ENCODE measurements at regions of chr13 and their contacts with region 1.

Region 1: DNA sequence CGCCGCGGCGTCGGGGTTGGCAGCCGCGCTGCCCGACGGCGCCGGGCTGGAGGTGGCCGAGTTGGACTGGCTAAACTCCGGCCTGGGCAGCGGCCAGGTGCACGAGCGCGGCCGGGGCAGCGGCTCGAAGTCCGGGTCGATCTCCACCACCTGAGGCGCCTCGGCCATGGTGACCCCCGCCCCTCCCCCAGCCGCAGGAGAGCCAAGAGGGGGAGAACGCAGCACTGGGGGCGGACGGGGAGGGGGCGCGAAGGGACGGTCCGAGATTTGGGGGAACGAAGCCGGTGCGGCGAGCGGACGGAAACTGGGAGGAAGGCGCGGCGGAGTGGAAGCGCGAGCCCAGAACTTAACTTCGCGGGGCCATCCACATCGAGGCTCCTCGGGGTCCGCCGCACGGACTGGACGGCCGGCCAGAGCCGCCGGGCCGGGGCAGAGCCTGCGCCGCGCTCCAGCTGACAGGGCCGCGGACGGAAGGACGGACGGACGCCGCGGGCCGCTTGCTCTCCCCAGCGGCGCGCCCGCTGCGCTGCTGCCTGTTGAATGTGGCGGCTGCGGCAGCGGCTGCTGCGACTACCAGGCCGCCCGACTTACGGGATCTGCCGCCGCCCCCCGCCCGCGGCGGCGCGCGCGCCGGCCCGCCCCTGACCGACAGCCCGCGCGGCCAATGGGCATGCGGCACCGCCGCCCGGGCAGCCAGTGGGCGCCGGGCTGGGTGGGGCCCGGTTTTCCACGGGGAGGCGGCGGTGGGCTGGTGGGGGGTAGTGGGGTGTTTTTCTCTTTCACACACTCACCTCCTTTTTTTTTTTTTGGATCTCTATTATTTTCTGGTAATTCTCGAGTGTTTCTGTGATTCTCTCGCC is at the start of gene FOXO1:
- DNase-seq: peak; percentile 80 to 91
- ATAC-seq: peak; percentile 51 to 55
- H3K4me3 ChIP-seq: peak within 1 kb of the TSS; percentile 84 to 96 (median 93)
- H3K27ac ChIP-seq: peak within 1 kb of the TSS; percentile 96 to 99 (median 98)
- H3K4me1 ChIP-seq: peaks cover 20 to 30% of the 10 kb centered on the region in 2 donors
- H3K27me3 ChIP-seq: no peaks in the 10 kb centered on the region
- CTCF ChIP-seq: peak in 1 of 5 experiments; percentile 15
- POLR2A ChIP-seq: peak; percentile 98 to 99
- total RNA-seq, gene FOXO1: 117 to 250 (median 159) TPM

Region 2: GRCh38 chr13:40230833-40231266 is 435.4 kb before region 1 on chr13:
- in situ Hi-C with region 1: loop called (anchors 10 to 25 kb)
- intact Hi-C with region 1: loop called (anchors 2 kb)
- DNase-seq: no peak
- ATAC-seq: no peak
- H3K4me3 ChIP-seq: no peak overlapping the region
- H3K27ac ChIP-seq: peak overlapping the region; percentile 97 to 99 (median 98)
- H3K4me1 ChIP-seq: peaks cover 42 to 55% of the 10 kb centered on the region in 2 donors
- H3K27me3 ChIP-seq: no peaks in the 10 kb centered on the region
- CTCF ChIP-seq: no peak
- POLR2A ChIP-seq: no peak

Region 3: GRCh38 chr13:40401911-40402776 is 264.1 kb before region 1 on chr13:
- in situ Hi-C with region 1: no loop called
- intact Hi-C with region 1: loop called (anchors 2 kb)
- DNase-seq: peak; percentile 85 to 95
- ATAC-seq: peak; percentile 78 to 86
- H3K4me3 ChIP-seq: peak overlapping the region in 2 of 4 donors; percentile 10 to 25
- H3K27ac ChIP-seq: peak overlapping the region; percentile 48 to 75 (median 56)
- H3K4me1 ChIP-seq: peaks cover 32 to 42% of the 10 kb centered on the region in 2 donors
- H3K27me3 ChIP-seq: no peaks in the 10 kb centered on the region
- CTCF ChIP-seq: no peak
- POLR2A ChIP-seq: no peak

Region 4: GRCh38 chr13:40519637-40520036 is 146.6 kb before region 1 on chr13:
- in situ Hi-C with region 1: no loop called
- intact Hi-C with region 1: no loop called
- DNase-seq: no peak
- ATAC-seq: no peak
- H3K4me3 ChIP-seq: no peak overlapping the region
- H3K27ac ChIP-seq: no peak overlapping the region
- H3K4me1 ChIP-seq: no peaks in the 10 kb centered on the region
- H3K27me3 ChIP-seq: no peaks in the 10 kb centered on the region
- CTCF ChIP-seq: no peak
- POLR2A ChIP-seq: no peak

Region 5: DNA sequence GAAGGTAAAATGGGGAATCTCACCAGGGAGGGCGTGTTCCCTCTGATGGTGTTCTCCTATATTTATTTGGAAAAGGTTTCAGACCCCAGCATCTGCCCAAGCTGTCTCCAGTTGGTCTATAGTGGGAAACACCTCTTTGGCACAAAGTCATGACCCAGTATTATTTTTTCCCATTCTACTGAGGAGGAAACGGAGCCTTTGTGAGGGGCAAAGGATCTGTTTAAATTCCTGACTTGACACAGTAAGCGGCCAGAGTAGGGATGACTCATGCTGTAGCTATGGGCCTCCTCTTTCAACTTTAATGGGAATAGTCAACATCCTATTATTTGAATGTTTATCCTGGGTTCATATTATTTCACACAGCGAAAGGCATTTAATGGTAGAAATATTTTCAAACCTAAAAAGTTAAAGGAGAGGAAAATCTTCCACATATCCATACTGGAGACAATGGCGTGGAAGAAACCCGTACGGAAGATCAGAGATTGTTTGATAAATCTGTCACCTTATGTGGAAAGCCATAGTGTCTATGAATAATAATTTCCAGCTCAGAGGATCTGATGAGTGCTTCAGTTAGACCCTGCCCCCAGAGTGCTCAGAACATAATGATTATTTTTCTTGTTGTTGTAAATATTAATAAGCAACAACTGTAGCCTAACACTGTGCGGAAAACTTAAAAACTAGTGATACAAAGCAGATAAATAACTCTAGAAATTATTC is 125.8 kb before region 1 on chr13:
- in situ Hi-C with region 1: loop called in 1 of 4 experiments (anchors 25 kb)
- intact Hi-C with region 1: loop called (anchors 5 kb)
- DNase-seq: no peak
- ATAC-seq: no peak
- H3K4me3 ChIP-seq: no peak overlapping the region
- H3K27ac ChIP-seq: peak overlapping the region; percentile 30 to 60 (median 57)
- H3K4me1 ChIP-seq: peaks cover 15 to 24% of the 10 kb centered on the region in 2 donors
- H3K27me3 ChIP-seq: no peaks in the 10 kb centered on the region
- CTCF ChIP-seq: no peak
- POLR2A ChIP-seq: no peak

Region 6: GRCh38 chr13:40596484-40596883 is 69.8 kb before region 1 on chr13:
- in situ Hi-C with region 1: no loop called
- intact Hi-C with region 1: loop called (anchors 5 kb)
- DNase-seq: peak; percentile 48 to 66
- ATAC-seq: peak; percentile 63 to 78
- H3K4me3 ChIP-seq: peak overlapping the region in 3 of 4 donors; percentile 13 to 19 (median 18)
- H3K27ac ChIP-seq: peak overlapping the region; percentile 83 to 89 (median 86)
- H3K4me1 ChIP-seq: peaks cover 97 to 100% of the 10 kb centered on the region in 2 donors
- H3K27me3 ChIP-seq: no peaks in the 10 kb centered on the region
- CTCF ChIP-seq: no peak
- POLR2A ChIP-seq: no peak

Region 7: GRCh38 chr13:41259875-41260501 is 593.7 kb after region 1 on chr13:
- in situ Hi-C with region 1: no loop called
- intact Hi-C with region 1: no loop called
- DNase-seq: no peak
- ATAC-seq: no peak
- H3K4me3 ChIP-seq: no peak overlapping the region
- H3K27ac ChIP-seq: no peak overlapping the region
- H3K4me1 ChIP-seq: peaks cover 8% of the 10 kb centered on the region in 2 donors
- H3K27me3 ChIP-seq: no peaks in the 10 kb centered on the region
- CTCF ChIP-seq: no peak
- POLR2A ChIP-seq: no peak